Activated CD8-positive, alpha-beta T cell treated with anti-CD3 and anti-CD28 coated beads for 36 hours (primary cell): ENCODE measurements at regions of chr6 and their contacts with region 1.

Region 1: DNA sequence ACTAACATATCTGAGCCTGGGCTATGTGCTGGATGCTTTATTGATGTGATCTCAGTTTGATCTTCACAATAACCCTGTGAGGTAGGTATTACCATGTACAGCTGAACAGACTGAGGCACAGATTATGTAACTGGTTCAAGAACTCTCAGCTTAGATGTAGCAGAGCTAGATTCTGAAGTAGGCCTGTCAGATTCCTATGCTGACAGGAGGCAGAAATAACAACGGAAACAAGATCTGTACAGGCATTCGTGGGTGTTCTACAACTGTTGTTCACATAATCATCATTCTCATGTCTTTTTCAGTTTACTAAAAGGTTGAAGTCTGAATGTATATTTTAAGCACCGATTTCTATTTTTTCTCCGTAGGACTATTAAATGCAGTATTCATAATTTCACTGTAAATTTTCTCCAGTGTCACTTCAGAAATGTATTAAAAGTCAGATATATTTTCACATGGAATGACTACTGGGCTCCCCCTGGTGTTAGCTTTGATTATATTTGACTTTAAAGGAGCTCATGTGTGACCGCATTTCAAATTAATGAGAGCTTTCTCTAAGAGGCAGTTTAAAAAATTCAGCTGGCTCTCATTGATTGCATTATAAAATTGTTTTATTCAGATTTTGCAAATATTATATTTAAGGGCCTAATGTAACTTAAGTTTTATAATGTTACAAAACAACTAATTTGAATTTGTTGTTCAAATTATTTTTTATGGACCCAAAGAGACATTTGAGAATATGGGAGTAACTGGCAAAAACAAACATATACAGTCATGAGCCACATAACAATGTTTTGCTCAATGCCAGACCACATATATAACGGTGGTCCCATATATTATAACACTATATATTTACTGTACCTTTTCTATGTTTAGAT is 36.4 kb upstream of the SLC17A4 start:
- DNase-seq: no peak
- ATAC-seq: no peak
- H3K4me3 Mint-ChIP-seq: no peak overlapping the region
- H3K27ac Mint-ChIP-seq: no peak overlapping the region
- H3K4me1 Mint-ChIP-seq: no peaks in the 10 kb centered on the region
- H3K27me3 Mint-ChIP-seq: peaks cover 9% of the 10 kb centered on the region
- CTCF ChIP-seq: peak; percentile 62

Region 2: GRCh38 chr6:25623879-25624278 is 94.2 kb before region 1 on chr6:
- CTCF ChIA-PET with region 1: no interaction called
- POLR2A ChIA-PET with region 1: no interaction called
- intact Hi-C with region 1: no loop called
- DNase-seq: no peak
- ATAC-seq: no peak
- H3K4me3 Mint-ChIP-seq: no peak overlapping the region
- H3K27ac Mint-ChIP-seq: no peak overlapping the region
- H3K4me1 Mint-ChIP-seq: no peaks in the 10 kb centered on the region
- H3K27me3 Mint-ChIP-seq: peaks cover 1% of the 10 kb centered on the region
- CTCF ChIP-seq: no peak

Region 3: DNA sequence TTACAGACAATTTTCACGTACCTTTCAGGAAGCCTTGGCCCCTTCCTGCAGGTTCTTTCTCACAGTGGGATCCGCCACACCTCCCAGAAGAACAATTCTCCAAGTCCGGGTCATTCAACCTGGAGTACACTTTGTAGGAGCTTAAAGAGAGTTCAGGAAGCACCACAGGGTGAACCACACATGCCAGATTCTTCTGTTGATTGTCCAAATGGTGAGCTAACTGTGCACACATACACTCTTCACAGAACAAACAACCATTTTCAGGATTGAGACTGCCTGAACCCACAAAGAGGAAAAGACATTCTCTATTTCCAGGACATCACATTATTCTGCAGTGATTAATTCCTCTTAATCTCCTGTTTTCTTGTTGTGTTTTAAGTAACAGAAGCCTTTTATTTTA is 15.1 kb before region 1 on chr6:
- CTCF ChIA-PET with region 1: interaction called, 14 read pairs
- POLR2A ChIA-PET with region 1: no interaction called
- intact Hi-C with region 1: no loop called
- DNase-seq: no peak
- ATAC-seq: no peak
- H3K4me3 Mint-ChIP-seq: no peak overlapping the region
- H3K27ac Mint-ChIP-seq: no peak overlapping the region
- H3K4me1 Mint-ChIP-seq: no peaks in the 10 kb centered on the region
- H3K27me3 Mint-ChIP-seq: peaks cover 7% of the 10 kb centered on the region
- CTCF ChIP-seq: no peak

Region 4: GRCh38 chr6:25732468-25733198 is 14.5 kb after region 1 on chr6:
- CTCF ChIA-PET with region 1: interaction called, 19 read pairs
- POLR2A ChIA-PET with region 1: no interaction called
- intact Hi-C with region 1: no loop called
- DNase-seq: no peak
- ATAC-seq: no peak
- H3K4me3 Mint-ChIP-seq: no peak overlapping the region
- H3K27ac Mint-ChIP-seq: no peak overlapping the region
- H3K4me1 Mint-ChIP-seq: no peaks in the 10 kb centered on the region
- H3K27me3 Mint-ChIP-seq: peaks cover 30% of the 10 kb centered on the region
- CTCF ChIP-seq: no peak

Region 5: DNA sequence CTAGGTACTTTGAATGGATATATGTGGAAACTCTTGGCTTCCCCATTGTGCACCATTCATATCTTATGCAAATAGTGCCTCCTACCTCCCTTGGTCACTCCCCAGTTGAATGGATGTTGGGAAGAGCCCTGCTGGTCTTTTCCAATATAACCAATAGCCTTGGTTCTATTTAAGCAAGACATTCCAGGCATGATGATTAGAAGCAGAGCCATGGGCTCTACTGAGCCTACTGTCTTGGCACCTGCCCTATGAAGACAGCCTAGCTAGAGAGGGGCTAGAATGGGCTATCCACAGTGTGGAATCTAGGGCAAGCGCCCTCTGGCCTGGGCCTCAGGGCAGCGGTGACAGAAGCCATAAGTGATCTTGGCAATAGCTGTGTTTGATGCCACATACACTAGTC is 98.1 kb after region 1 on chr6:
- CTCF ChIA-PET with region 1: no interaction called
- POLR2A ChIA-PET with region 1: no interaction called
- intact Hi-C with region 1: no loop called
- DNase-seq: no peak
- ATAC-seq: no peak
- H3K4me3 Mint-ChIP-seq: no peak overlapping the region
- H3K27ac Mint-ChIP-seq: no peak overlapping the region
- H3K4me1 Mint-ChIP-seq: no peaks in the 10 kb centered on the region
- H3K27me3 Mint-ChIP-seq: peaks cover 8% of the 10 kb centered on the region
- CTCF ChIP-seq: no peak

Region 6: DNA sequence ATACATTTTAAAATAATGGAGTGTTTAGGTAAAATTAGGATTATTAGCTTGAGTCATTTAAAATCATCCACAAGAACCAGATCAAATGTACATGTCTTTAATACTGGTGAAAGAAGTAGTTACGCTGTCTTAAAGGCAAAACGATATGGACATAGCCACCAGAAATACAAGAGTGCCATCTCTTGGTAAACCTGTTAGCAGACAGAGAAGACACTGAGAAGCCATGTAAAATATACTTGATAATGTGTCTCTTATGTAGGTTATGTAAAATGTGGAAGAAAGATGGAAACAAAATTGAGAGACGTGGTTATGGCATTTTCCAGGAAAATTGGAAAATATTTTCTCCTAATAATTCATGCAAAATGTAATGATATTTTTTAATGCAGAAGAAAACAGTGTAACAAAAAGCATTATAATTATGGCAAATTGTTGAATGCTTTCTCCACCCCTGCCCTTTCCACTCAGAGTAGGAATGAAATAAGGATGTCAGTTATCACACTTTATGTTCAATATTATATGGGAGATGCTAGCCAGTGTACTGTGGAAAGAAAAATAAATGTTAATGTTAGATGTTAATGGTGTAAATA is 224.6 kb after region 1 on chr6:
- CTCF ChIA-PET with region 1: interaction called, 15 read pairs
- POLR2A ChIA-PET with region 1: no interaction called
- intact Hi-C with region 1: no loop called
- DNase-seq: no peak
- ATAC-seq: no peak
- H3K4me3 Mint-ChIP-seq: no peak overlapping the region
- H3K27ac Mint-ChIP-seq: no peak overlapping the region
- H3K4me1 Mint-ChIP-seq: peaks cover 16% of the 10 kb centered on the region
- H3K27me3 Mint-ChIP-seq: peaks cover 6% of the 10 kb centered on the region
- CTCF ChIP-seq: peak; percentile 67